ENCODE measurements at regions of chr18 and their contacts with region 1.

Region 1: GRCh38 chr18:56575819-56576663 is 62.4 kb downstream of the TXNL1 start:
- DNase-seq: no peak
- ATAC-seq: peak; percentile 81 to 93 (median 90)
- H3K4me3 ChIP-seq: no peak overlapping the region
- H3K27ac ChIP-seq: no peak overlapping the region
- H3K4me1 ChIP-seq: peaks cover 11 to 16% (median 15%) of the 10 kb centered on the region in 3 donors
- H3K27me3 ChIP-seq: no peaks in the 10 kb centered on the region
- CTCF ChIP-seq: peak in 3 of 4 donors; percentile 32 to 57 (median 52)

Region 2: DNA sequence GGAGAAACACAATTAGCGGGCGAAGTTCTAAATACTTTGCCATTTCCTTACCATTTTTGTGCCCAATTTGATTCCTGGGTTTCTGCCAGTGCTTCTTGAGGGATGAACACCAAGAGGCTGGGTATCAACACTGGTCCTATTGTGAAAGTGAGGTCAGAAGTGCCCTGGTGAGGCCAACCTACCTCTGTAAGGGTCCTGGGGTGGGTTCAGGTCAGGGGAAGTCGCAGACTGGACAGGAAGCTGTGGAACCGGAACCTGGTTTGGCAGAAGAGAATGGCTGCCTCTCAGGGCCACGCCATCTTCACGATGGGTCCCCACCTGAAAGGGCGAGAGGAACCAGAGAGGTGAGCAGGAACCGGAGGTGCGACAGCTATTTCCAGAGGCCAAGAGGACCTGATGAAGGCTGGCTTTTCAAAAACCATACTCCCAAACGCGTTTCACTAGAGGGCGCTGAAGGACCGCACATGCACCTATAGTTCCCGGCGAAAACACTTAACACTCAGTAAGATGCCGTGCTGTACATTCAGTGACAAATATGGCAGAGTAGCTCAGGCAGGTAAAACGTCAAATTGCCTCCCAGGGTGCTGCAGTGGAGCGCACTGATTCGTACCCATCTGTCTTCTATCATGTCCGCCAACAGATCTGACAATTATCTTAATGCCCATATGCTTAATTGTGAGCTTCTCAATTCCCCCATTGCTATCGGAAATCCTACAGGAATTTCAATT is 1341.5 kb before region 1 on chr18:
- intact Hi-C with region 1: loop called in 1 of 3 experiments (anchors 10 kb)
- DNase-seq: peak; percentile 37 to 83 (median 64)
- ATAC-seq: peak; percentile 96 to 99 (median 98)
- H3K4me3 ChIP-seq: peak overlapping the region in 1 of 4 donors; percentile 8
- H3K27ac ChIP-seq: no peak overlapping the region
- H3K4me1 ChIP-seq: peaks cover 0 to 5% (median 0%) of the 10 kb centered on the region in 3 donors
- H3K27me3 ChIP-seq: no peaks in the 10 kb centered on the region
- CTCF ChIP-seq: peak in 3 of 4 donors; percentile 51 to 68 (median 60)

Region 3: GRCh38 chr18:55415258-55415871 is 1160.7 kb before region 1 on chr18:
- intact Hi-C with region 1: loop called in 2 of 3 experiments (anchors 10 kb)
- DNase-seq: peak; percentile 56 to 93 (median 78)
- ATAC-seq: peak; percentile 80 to 94 (median 94)
- H3K4me3 ChIP-seq: no peak overlapping the region
- H3K27ac ChIP-seq: no peak overlapping the region
- H3K4me1 ChIP-seq: peaks cover 0 to under 1% (median 0%) of the 10 kb centered on the region in 3 donors
- H3K27me3 ChIP-seq: no peaks in the 10 kb centered on the region
- CTCF ChIP-seq: peak; percentile 59 to 81 (median 74)

Region 4: GRCh38 chr18:55422456-55423180 is 1153.4 kb before region 1 on chr18:
- intact Hi-C with region 1: loop called in 2 of 3 experiments (anchors 10 kb)
- DNase-seq: peak in 1 of 6 donors; percentile 11
- ATAC-seq: peak in 3 of 4 donors; percentile 35 to 69 (median 42)
- H3K4me3 ChIP-seq: no peak overlapping the region
- H3K27ac ChIP-seq: peak overlapping the region in 2 of 4 donors; percentile 4 to 59
- H3K4me1 ChIP-seq: peaks cover 0 to 7% (median 0%) of the 10 kb centered on the region in 3 donors
- H3K27me3 ChIP-seq: no peaks in the 10 kb centered on the region
- CTCF ChIP-seq: no peak

Region 5: DNA sequence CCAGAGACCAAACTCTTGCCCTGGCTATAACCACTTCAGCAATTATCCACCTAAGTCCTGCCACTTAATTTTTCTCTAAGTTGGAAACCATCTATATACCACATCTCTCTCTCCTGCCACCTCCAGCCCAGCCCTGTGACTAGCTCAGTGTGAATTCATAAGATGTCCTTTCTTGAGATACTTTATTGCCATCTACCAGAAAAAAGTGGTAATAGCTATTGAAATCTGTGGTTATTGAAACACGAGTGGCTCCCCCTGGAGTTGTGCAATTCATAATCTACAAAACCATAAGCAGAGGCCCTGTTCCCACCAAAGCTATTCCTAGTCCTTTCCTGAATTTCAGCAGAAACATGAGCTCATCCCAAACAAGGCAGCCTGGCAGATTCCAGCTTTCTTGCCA is 261.6 kb before region 1 on chr18:
- intact Hi-C with region 1: no loop called
- DNase-seq: peak in 2 of 6 donors; percentile 11 to 14
- ATAC-seq: peak; percentile 55 to 94 (median 78)
- H3K4me3 ChIP-seq: no peak overlapping the region
- H3K27ac ChIP-seq: no peak overlapping the region
- H3K4me1 ChIP-seq: no peaks in the 10 kb centered on the region
- H3K27me3 ChIP-seq: no peaks in the 10 kb centered on the region
- CTCF ChIP-seq: no peak

Region 6: GRCh38 chr18:56650944-56651770 is 75.1 kb after region 1 on chr18 and contains the start of gene WDR7:
- intact Hi-C with region 1: no loop called
- DNase-seq: peak; percentile 91 to 98 (median 96)
- ATAC-seq: peak; percentile 97 to 98 (median 98)
- H3K4me3 ChIP-seq: peak within 1 kb of the TSS; percentile 72 to 90 (median 83)
- H3K27ac ChIP-seq: peak within 1 kb of the TSS; percentile 43 to 79 (median 60)
- H3K4me1 ChIP-seq: peaks cover 0 to 11% (median 5%) of the 10 kb centered on the region in 3 donors
- H3K27me3 ChIP-seq: no peaks in the 10 kb centered on the region
- CTCF ChIP-seq: no peak
- total RNA-seq, gene WDR7: 6.7 to 14.4 (median 10.9) TPM

Region 7: DNA sequence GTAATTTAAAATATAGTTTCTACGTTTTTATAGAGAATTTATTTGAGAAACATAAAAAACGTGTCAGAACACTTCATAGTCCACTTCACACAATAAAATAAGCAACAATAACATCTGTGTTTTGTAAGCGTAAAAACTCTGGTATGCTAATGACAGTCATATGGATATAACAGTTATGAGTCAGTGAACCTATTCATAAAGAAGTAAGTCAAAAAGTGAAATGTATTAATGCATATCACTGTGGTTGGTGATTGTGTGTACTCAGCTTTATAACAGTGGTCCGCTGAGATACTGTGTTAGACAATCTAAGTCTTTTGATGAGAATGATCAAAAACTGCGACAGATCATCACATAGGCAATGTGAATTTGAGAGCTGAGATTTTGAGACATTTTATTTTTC is 228.4 kb after region 1 on chr18:
- intact Hi-C with region 1: no loop called
- DNase-seq: no peak
- ATAC-seq: no peak
- H3K4me3 ChIP-seq: no peak overlapping the region
- H3K27ac ChIP-seq: no peak overlapping the region
- H3K4me1 ChIP-seq: peaks cover 0 to 10% (median 5%) of the 10 kb centered on the region in 3 donors
- H3K27me3 ChIP-seq: no peaks in the 10 kb centered on the region
- CTCF ChIP-seq: no peak